ENCODE measurements at regions of chr5 and their contacts with region 1.

Region 1: GRCh38 chr5:133453831-133454230 is 158.5 kb downstream of the FSTL4 start:
- DNase-seq: no peak
- ATAC-seq: no peak
- H3K4me3 ChIP-seq: no peak overlapping the region
- H3K27ac ChIP-seq: no peak overlapping the region
- H3K4me1 ChIP-seq: peaks cover 0 to 12% (median 0%) of the 10 kb centered on the region in 9 donors
- H3K27me3 ChIP-seq: peaks cover 0 to 23% (median 0%) of the 10 kb centered on the region in 7 donors
- CTCF ChIP-seq: no peak

Region 2: DNA sequence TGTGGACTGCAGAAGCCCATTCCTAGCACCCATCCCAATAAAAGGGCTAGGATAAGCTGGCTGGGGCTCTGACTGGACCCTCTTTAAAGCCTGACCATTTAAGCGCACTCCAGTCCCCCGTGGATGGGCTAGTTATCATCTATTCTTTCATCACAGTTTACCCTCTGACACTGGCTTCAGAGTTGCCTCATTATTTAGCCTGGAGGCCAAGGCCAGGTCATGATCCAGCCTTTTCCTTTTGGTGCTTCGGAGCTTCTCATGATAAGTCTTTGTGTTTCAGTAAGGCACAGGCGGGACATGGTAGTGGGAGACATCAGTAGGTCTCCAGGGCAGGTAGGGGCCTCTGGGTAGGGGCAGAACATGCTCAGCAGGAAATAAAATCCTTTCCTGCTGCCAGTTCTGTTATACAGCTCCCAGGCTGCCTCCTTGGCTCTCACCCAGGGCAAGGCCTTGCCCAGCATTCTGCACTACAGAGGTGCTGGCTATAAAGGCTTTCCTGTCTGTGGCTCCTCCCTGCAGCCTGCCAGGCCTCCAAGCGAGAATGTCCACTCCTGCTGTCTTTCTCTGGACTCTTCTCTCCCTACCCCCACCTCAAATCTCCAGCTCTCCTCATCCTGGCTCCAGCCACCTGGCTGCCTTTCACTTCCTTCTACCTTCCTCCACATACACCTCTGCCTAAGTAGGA is 29.7 kb after region 1 on chr5:
- intact Hi-C with region 1: loop called in 1 of 10 experiments (anchors 1 kb)
- DNase-seq: peak in 1 of 2 donors; percentile 29
- ATAC-seq: peak in 3 of 8 donors; percentile 64 to 75 (median 67)
- H3K4me3 ChIP-seq: no peak overlapping the region
- H3K27ac ChIP-seq: no peak overlapping the region
- H3K4me1 ChIP-seq: peaks cover 0 to 5% (median 0%) of the 10 kb centered on the region in 9 donors
- H3K27me3 ChIP-seq: peaks cover 0 to 4% (median 0%) of the 10 kb centered on the region in 7 donors
- CTCF ChIP-seq: no peak

Region 3: DNA sequence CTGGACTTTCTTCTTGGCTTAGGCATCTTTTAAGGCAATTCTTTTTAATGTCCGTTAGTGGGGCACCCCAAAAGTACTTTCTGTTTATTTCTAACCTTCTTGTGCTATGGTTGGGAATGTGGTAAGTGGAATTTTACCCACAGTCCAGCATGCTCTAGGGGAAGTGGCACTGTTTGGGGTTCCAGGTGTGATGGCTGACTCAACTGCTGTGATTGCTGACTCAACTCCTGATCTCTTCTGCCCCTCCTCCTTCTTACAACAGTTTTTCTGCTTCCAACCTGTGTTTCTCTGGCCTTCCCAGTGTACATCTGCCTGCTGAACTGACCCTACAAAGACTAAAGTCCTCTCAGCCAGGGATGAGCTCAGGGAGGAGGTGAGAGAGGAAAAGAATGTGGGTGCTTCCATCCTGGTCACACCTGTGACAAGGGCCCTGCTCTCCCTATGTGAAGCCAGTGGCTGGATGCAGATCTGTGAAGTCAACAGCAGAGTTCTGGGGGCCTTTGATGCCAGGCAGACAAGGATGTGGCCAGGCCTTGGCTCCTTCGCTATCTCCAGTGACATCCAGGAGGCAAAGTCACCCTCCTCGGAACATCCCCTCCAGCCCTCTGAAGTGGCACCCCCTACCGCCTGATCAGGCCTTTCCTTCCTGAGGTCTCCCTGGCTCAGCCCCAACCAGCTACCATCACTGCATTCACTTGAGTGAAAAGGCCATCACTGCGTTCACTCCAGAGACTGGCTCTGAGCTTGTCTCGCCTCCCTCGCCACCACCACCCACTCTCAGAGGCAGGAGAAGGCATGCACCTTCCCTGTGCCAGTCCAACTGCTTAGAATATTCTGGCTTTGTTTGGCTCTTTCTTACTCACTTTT is 442.4 kb after region 1 on chr5:
- intact Hi-C with region 1: no loop called
- DNase-seq: no peak
- ATAC-seq: no peak
- H3K4me3 ChIP-seq: no peak overlapping the region
- H3K27ac ChIP-seq: no peak overlapping the region
- H3K4me1 ChIP-seq: peaks cover 0 to 17% (median 9%) of the 10 kb centered on the region in 9 donors
- H3K27me3 ChIP-seq: no peaks in the 10 kb centered on the region
- CTCF ChIP-seq: no peak